Calu3 (cell line): ENCODE measurements at regions of chr13 and their contacts with region 1.

Region 1: GRCh38 chr13:41193919-41194824 is at the start of gene KBTBD7:
- DNase-seq: peak; percentile 87
- H3K4me3 Mint-ChIP-seq: peak within 1 kb of the TSS; percentile 95
- H3K27ac Mint-ChIP-seq: peak within 1 kb of the TSS; percentile 78
- H3K4me1 Mint-ChIP-seq: peaks cover 7% of the 10 kb centered on the region
- H3K27me3 Mint-ChIP-seq: no peaks in the 10 kb centered on the region
- CTCF ChIP-seq: no peak
- total RNA-seq, gene KBTBD7: 6.3 and 6.4 TPM in 2 replicates

Region 2: GRCh38 chr13:41075034-41075433 is 119.1 kb before region 1 on chr13:
- CTCF ChIA-PET with region 1: interaction called, 3 read pairs
- intact Hi-C with region 1: loop called (anchors 1 kb)
- DNase-seq: no peak
- H3K4me3 Mint-ChIP-seq: no peak overlapping the region
- H3K27ac Mint-ChIP-seq: no peak overlapping the region
- H3K4me1 Mint-ChIP-seq: no peaks in the 10 kb centered on the region
- H3K27me3 Mint-ChIP-seq: no peaks in the 10 kb centered on the region
- CTCF ChIP-seq: no peak

Region 3: DNA sequence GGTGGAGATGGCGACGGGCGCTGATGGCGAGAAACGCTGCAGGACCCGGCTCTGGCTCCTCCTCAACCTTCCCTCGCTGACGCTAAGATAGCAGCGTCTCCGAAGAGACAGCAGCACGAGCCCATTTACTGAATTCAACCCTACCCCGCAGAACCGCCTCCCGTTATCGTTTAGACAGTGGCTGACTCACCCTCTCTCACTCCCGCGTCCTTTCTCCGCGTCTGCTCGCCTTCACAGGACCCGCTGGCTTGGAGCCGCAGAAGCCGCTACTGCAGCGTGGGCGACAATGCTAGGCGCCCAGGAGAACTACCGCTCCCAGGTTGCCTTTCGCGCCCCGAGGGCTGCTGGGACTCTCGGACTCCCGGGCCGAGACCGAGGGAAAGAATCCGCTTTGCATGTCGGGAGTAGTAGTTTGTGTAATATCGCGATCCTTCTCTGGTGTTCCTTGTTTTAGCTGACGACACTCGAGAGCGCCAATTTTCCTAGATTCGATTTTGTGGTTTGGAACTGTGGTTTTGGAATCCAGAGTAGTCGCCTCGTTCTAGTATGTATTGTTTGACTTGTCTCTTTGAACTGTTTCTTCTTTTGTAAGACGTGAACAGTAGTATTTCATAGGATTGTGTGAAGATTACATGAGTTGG is 61.5 kb before region 1 on chr13 and contains the start of gene KBTBD6:
- CTCF ChIA-PET with region 1: no interaction called
- intact Hi-C with region 1: loop called (anchors 2 kb)
- DNase-seq: peak; percentile 91
- H3K4me3 Mint-ChIP-seq: peak within 1 kb of the TSS; percentile 92
- H3K27ac Mint-ChIP-seq: peak within 1 kb of the TSS; percentile 12
- H3K4me1 Mint-ChIP-seq: peaks cover 38% of the 10 kb centered on the region
- H3K27me3 Mint-ChIP-seq: no peaks in the 10 kb centered on the region
- CTCF ChIP-seq: no peak
- total RNA-seq, gene KBTBD6: 6.6 and 6.9 TPM in 2 replicates